CD4-positive, alpha-beta memory T cell (primary cell): ENCODE measurements at regions of chrX and their contacts with region 1.

Region 1: GRCh38 chrX:154980330-154981096 is 42.0 kb downstream of the F8 start:
- DNase-seq: peak; percentile 73 to 78 (median 77)
- H3K4me3 ChIP-seq: peak overlapping the region in 1 of 2 donors; percentile 23
- H3K4me3 Mint-ChIP-seq: peak overlapping the region; percentile 83 to 91 (median 88)
- H3K27ac ChIP-seq: peak overlapping the region; percentile 17
- H3K27ac Mint-ChIP-seq: peak overlapping the region; percentile 50 to 95 (median 88)
- H3K4me1 ChIP-seq: peaks cover 7% of the 10 kb centered on the region
- H3K4me1 Mint-ChIP-seq: peaks cover 0 to 9% (median 6%) of the 10 kb centered on the region in 4 donors
- H3K27me3 ChIP-seq: no peaks in the 10 kb centered on the region
- H3K27me3 Mint-ChIP-seq: no peaks in the 10 kb centered on the region

Region 2: DNA sequence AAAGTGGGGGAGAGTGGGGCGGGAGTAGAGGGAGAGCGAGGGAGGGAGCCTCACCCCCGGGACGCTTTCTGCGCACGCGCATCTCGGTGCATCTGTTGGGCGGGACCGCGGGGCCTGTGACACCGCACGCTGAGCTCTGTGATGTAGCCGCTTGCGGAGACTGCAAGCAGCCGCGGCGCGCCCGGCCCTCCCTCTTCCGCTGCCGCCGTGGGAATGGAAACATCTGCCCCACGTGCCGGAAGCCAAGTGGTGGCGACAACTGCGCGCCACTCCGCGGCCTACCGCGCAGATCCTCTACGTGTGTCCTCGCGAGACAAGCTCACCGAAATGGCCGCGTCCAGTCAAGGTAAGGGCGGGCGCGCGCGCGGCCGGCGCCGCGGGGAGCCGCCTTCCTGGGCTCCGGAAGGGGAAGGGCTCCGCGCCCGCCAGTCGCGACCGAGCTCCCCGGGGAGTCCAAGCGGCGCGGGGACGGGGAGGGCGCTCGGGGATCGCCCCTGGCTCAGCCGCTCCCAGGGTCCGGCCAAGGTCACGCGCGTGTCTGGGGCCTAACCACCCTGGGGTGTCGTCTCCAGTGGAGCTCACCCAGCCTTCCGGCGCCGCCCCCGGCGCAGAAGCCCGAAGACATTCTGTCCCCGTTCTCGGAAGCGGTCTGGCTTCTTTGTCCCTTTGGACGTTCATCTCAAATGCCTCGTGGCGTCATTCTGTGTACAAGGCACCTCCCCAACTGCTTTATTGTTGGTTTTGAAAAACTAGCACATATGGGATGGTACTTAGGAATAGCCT is 46.4 kb after region 1 on chrX and contains the start of gene FUNDC2:
- CTCF ChIA-PET with region 1: no interaction called
- POLR2A ChIA-PET with region 1: interaction called, 7 read pairs
- intact Hi-C with region 1: loop called (anchors 2 kb)
- DNase-seq: peak; percentile 90 to 96 (median 95)
- H3K4me3 ChIP-seq: peak within 1 kb of the TSS; percentile 73 to 82
- H3K4me3 Mint-ChIP-seq: peak within 1 kb of the TSS; percentile 86 to 93 (median 90)
- H3K27ac ChIP-seq: peak within 1 kb of the TSS; percentile 94
- H3K27ac Mint-ChIP-seq: peak within 1 kb of the TSS; percentile 95 to 97 (median 96)
- H3K4me1 ChIP-seq: peaks cover 15% of the 10 kb centered on the region
- H3K4me1 Mint-ChIP-seq: peaks cover 8 to 36% (median 20%) of the 10 kb centered on the region in 4 donors
- H3K27me3 ChIP-seq: no peaks in the 10 kb centered on the region
- H3K27me3 Mint-ChIP-seq: no peaks in the 10 kb centered on the region
- total RNA-seq, gene FUNDC2: 52.6 to 53.6 TPM

Region 3: GRCh38 chrX:155070975-155071693 is 90.6 kb after region 1 on chrX and contains the starts of genes BRCC3, CMC4 and MTCP1:
- CTCF ChIA-PET with region 1: no interaction called
- POLR2A ChIA-PET with region 1: no interaction called
- intact Hi-C with region 1: loop called (anchors 5 kb)
- DNase-seq: peak; percentile 70 to 79 (median 77)
- H3K4me3 ChIP-seq: peak within 1 kb of the TSS; percentile 47 to 72
- H3K4me3 Mint-ChIP-seq: peak within 1 kb of the TSS; percentile 87 to 96 (median 90)
- H3K27ac ChIP-seq: peak within 1 kb of the TSS; percentile 82
- H3K27ac Mint-ChIP-seq: peak within 1 kb of the TSS; percentile 93 to 96 (median 95)
- H3K4me1 ChIP-seq: peaks cover 43% of the 10 kb centered on the region
- H3K4me1 Mint-ChIP-seq: peaks cover 35 to 70% (median 40%) of the 10 kb centered on the region in 4 donors
- H3K27me3 ChIP-seq: no peaks in the 10 kb centered on the region
- H3K27me3 Mint-ChIP-seq: no peaks in the 10 kb centered on the region
- total RNA-seq, gene BRCC3: 19.2 to 19.7 TPM
- total RNA-seq, gene CMC4: 6.1 to 7.0 TPM
- total RNA-seq, gene MTCP1: 21.8 to 24.2 TPM

Region 4: DNA sequence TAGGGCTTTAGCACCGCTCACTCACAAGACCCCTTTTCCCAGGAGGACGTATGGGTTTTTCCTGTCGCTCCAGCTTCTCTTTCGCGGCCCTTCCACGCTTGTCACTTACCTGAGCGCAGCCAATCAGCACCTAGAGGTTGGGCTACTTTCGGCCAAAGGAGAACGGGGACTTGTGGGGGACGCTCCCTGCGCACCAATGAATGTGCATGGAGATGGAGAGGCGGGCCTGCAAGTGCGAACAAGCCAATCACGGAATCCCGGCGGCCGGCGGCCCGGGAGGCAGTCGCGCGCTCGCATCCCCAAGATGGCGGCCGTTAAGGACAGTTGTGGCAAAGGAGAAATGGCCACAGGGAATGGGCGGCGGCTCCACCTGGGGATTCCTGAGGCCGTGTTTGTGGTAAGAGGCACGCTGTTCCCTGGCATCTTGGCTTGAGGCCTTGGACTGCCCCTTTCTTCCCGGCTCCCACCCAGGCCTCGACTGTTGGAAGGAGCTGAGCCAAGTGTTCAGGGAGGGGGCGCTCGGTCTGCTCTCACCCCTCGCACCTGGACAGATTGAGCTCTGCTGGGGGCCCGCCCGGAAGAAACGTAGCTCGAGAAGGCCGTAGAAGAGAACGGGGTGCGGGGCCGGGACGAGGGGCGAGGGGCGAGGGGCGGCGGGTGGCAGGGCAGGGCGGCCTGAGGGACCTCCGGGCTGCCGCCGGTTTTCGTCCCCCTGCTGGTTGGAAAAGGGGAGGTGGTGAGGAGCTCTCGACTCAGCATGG is 235.8 kb after region 1 on chrX and contains the start of gene VBP1:
- CTCF ChIA-PET with region 1: interaction called, 4 read pairs
- POLR2A ChIA-PET with region 1: interaction called, 5 read pairs
- intact Hi-C with region 1: loop called (anchors 1 kb)
- DNase-seq: peak; percentile 84 to 93 (median 86)
- H3K4me3 ChIP-seq: peak within 1 kb of the TSS; percentile 76 to 79
- H3K4me3 Mint-ChIP-seq: peak within 1 kb of the TSS; percentile 90 to 97 (median 94)
- H3K27ac ChIP-seq: peak within 1 kb of the TSS; percentile 78
- H3K27ac Mint-ChIP-seq: peak within 1 kb of the TSS; percentile 84 to 96 (median 91)
- H3K4me1 ChIP-seq: peaks cover 18% of the 10 kb centered on the region
- H3K4me1 Mint-ChIP-seq: peaks cover 17 to 36% (median 22%) of the 10 kb centered on the region in 4 donors
- H3K27me3 ChIP-seq: no peaks in the 10 kb centered on the region
- H3K27me3 Mint-ChIP-seq: no peaks in the 10 kb centered on the region
- total RNA-seq, gene VBP1: 30.8 to 33.9 TPM